ENCODE measurements at regions of chr12 and their contacts with region 1.

Region 1: DNA sequence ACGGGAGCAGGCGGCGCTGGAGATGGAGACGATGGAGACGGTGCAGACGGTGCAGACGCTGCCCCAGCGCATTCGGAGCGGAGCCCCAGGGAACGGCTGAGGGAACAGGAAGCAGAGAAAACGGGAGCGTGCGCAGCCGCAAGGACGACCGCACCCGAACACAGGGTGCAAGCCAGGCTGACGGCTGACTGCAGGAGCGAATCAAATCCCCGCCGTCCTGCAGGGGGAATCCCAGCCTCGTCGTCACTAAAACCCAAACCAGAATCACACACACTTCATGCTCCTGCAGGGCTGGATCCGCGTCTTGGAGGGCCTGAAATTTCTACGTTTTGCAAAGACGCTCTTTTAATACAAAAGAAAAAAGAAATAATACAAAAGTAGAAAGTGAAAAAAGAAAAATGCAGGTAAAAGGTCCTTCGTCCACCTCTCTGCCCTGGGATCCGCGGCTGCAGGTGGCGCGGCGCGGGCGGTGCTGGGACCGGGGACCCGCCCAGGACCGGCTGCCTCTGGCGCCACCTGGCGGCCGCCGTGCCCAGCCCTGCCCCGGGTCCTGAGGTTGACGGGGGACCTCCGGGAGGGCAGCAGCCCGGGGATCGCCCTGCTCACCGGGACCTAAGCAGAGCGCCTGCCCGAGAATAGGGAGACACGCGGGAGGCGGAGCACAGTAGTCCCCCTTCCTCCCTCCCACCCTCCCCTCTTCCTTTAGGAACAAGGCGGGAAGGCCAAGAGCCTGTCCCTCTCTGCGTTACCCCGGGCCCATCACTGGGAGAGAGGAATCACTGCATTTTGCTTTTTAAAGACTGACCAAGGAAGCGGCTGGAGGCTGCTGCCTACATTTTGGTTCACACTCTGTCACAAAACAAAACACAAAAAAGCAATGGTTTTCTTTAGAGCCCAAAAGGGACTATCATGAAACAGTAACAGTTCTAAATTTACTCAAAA is 20.1 kb downstream of the STX2 start:
- DNase-seq: peak; percentile 77
- H3K4me3 Mint-ChIP-seq: peak overlapping the region; percentile 73
- H3K27ac Mint-ChIP-seq: peak overlapping the region; percentile 75
- H3K4me1 Mint-ChIP-seq: peaks cover 20% of the 10 kb centered on the region
- H3K27me3 Mint-ChIP-seq: no peaks in the 10 kb centered on the region

Region 2: DNA sequence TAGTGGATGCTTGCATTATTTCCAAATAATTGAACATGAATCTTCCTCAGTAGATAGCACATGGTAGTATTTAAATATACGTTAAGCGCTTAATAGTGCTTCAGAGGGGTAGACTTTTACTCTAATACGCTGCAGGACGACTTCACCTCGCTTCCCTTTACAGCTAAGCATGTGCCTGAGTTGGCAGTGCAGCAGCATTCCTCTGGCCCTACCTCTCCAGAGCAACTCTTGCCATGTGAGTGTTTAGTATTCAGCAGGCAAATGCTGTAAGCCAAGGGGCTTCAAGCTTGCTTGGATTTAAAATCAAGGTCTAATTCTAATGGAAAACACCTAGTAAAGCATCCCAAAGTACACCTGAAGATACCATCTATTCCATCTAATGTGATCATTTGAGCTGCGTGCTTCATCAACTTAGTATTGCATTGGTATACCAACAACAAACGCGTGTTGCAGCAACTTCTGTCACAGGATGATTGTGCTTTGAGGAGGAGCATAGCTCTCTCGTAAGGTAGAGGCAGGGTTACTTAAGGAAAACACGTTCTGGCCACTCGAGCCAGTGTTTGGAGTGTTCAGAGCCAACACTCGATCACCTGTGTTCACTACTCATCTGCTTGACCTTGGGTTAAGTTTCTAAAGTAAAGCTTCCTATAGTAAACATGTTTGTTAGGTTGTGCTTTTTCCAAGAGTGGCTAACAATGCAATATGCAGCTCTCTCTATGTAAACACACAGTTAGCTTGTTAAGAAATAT is 420.6 kb before region 1 on chr12:
- CTCF ChIA-PET with region 1: no interaction called
- DNase-seq: no peak
- H3K4me3 Mint-ChIP-seq: no peak overlapping the region
- H3K27ac Mint-ChIP-seq: no peak overlapping the region
- H3K4me1 Mint-ChIP-seq: peaks cover 5% of the 10 kb centered on the region
- H3K27me3 Mint-ChIP-seq: no peaks in the 10 kb centered on the region

Region 3: GRCh38 chr12:130650131-130650530 is 168.8 kb before region 1 on chr12:
- CTCF ChIA-PET with region 1: no interaction called
- DNase-seq: no peak
- H3K4me3 Mint-ChIP-seq: no peak overlapping the region
- H3K27ac Mint-ChIP-seq: no peak overlapping the region
- H3K4me1 Mint-ChIP-seq: no peaks in the 10 kb centered on the region
- H3K27me3 Mint-ChIP-seq: no peaks in the 10 kb centered on the region

Region 4: GRCh38 chr12:130761537-130762318 is 57.2 kb before region 1 on chr12:
- CTCF ChIA-PET with region 1: interaction called, 15 read pairs
- DNase-seq: peak; percentile 72
- H3K4me3 Mint-ChIP-seq: no peak overlapping the region
- H3K27ac Mint-ChIP-seq: no peak overlapping the region
- H3K4me1 Mint-ChIP-seq: peaks cover 17% of the 10 kb centered on the region
- H3K27me3 Mint-ChIP-seq: peaks cover 14% of the 10 kb centered on the region

Region 5: GRCh38 chr12:130796985-130797686 is 21.8 kb before region 1 on chr12:
- CTCF ChIA-PET with region 1: no interaction called
- DNase-seq: peak; percentile 40
- H3K4me3 Mint-ChIP-seq: peak overlapping the region; percentile 2
- H3K27ac Mint-ChIP-seq: peak overlapping the region; percentile 87
- H3K4me1 Mint-ChIP-seq: peaks cover 9% of the 10 kb centered on the region
- H3K27me3 Mint-ChIP-seq: no peaks in the 10 kb centered on the region

Measured in activated naive CD4-positive, alpha-beta T cell treated with anti-CD3 and anti-CD28 coated beads, Interleukin-2, amount 10 ng/mL, durations not matched to agents 7 days and 5 days (primary cell).